ENCODE measurements at regions of chr1 and their contacts with region 1.

Region 1: DNA sequence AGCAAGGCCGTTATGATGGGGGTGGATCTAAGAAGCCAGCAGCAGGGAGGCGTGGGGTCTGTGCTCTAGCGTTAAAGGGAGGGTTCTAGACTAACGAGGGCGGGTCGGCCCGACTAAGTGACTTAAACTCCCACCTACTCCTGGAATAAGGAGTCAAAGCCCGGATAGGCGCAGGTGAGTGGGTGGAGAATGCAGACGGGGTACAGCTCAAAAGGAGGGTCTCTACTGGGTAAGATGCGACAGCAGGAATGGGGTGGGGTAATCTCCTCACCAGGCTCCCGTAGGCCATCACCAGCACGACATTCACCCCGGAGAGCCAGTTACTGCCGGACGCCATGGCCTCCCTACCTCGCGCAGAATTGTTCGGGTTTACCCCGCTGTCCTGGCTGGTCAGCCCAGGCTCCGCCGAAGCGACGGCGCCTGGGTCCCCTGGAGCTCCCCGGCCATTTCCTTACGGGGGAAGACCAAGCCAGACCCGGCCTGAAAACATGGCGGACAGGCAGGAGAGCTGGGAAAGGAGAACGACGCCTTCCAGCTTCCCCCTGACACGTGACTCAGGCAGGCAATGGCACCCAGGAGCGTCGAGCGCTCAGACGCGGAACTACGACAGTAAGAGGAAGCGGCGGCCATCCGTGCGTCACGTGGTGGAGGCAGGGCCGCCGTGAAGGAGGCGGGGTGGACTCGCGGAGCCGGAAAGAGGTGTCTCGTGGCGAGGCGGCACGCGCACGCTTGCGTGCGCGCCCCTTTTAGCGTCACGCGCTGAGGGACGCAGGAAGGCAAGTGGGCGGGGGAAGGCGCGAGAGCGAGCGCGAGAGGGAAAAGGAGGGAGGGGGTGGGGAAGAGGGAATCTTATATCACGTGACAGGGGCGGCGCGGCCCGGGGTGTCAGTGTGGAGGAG is at the start of gene UBAP2L:
- DNase-seq: peak; percentile 93 to 99 (median 99)
- ATAC-seq: peak; percentile 87
- H3K4me3 Mint-ChIP-seq: peak within 1 kb of the TSS; percentile 83 to 99 (median 96)
- H3K27ac Mint-ChIP-seq: peak within 1 kb of the TSS; percentile 99 to 100 (median 100)
- H3K4me1 Mint-ChIP-seq: peaks cover 44 to 74% (median 74%) of the 10 kb centered on the region in 4 donors
- H3K27me3 Mint-ChIP-seq: peaks cover 0 to 2% (median 0%) of the 10 kb centered on the region in 5 donors
- polyA plus RNA-seq, gene UBAP2L: 42.0 to 70.5 (median 54.8) TPM

Region 2: GRCh38 chr1:154157520-154158306 is 62.6 kb before region 1 on chr1:
- POLR2A ChIA-PET with region 1: interaction called, 27 read pairs
- DNase-seq: peak; percentile 23 to 90 (median 76)
- ATAC-seq: peak; percentile 98
- H3K4me3 Mint-ChIP-seq: peak overlapping the region; percentile 54 to 85 (median 80)
- H3K27ac Mint-ChIP-seq: peak overlapping the region; percentile 93 to 98 (median 95)
- H3K4me1 Mint-ChIP-seq: peaks cover 39 to 73% (median 65%) of the 10 kb centered on the region in 4 donors
- H3K27me3 Mint-ChIP-seq: no peaks in the 10 kb centered on the region

Region 3: GRCh38 chr1:154183045-154183915 is 37.0 kb before region 1 on chr1:
- POLR2A ChIA-PET with region 1: interaction called, 29 read pairs
- DNase-seq: peak; percentile 87 to 96 (median 94)
- ATAC-seq: peak; percentile 80 to 81
- H3K4me3 Mint-ChIP-seq: peak overlapping the region; percentile 97 to 100 (median 100)
- H3K27ac Mint-ChIP-seq: peak overlapping the region; percentile 95 to 100 (median 99)
- H3K4me1 Mint-ChIP-seq: peaks cover 36 to 51% (median 46%) of the 10 kb centered on the region in 4 donors
- H3K27me3 Mint-ChIP-seq: peaks cover 0 to 6% (median 0%) of the 10 kb centered on the region in 5 donors

Region 4: GRCh38 chr1:154386643-154387352 is 166.5 kb after region 1 on chr1:
- POLR2A ChIA-PET with region 1: no interaction called
- DNase-seq: peak; percentile 41 to 84 (median 65)
- ATAC-seq: peak; percentile 92 to 93
- H3K4me3 Mint-ChIP-seq: peak overlapping the region; percentile 67 to 87 (median 84)
- H3K27ac Mint-ChIP-seq: peak overlapping the region; percentile 93 to 100 (median 97)
- H3K4me1 Mint-ChIP-seq: peaks cover 14 to 56% (median 36%) of the 10 kb centered on the region in 4 donors
- H3K27me3 Mint-ChIP-seq: no peaks in the 10 kb centered on the region

Region 5: DNA sequence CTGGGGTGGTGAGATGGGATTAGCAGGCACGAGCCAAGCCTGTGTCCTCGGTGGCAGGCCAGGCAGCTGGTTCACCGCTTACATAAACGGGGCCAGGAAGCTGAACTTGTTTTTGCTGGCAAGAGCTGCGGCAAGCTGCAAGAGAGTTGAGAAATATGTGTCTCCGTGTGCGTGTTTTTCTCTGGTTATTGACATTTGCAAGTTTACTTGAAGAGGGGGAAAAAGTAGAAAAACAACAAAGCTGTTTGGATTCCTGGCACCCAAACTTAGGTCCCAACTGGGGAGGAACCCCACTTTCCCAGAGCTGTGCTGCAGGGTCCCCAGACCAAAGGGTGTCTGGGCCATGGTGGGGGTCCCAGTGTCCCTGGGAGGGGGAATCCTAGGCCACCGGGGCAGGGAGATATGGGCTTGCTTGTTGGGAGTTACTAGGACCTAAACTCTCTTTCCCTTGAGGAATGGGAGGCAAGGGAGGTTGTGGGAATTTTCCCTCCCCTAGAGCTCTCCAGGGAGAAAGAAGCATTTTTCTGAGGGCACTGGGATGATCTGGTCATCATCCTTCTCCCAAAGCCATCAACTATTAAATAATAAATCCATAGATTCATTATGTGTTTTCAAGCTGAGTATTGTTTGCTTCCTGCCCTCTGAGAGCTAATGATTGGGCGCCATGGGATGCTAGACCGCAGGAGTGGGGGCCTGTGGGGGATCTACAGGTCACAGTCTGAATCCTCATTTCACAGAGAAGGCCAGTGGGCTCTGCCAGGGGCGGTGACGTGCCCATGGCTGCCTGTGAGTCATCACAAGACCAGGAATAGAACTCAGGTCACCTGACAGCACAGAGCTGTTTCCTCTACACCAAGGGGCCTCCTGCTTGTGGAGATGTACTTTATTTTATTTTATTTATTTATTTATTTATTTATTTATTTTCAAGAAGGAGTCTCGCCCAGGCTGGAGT is 199.6 kb after region 1 on chr1:
- POLR2A ChIA-PET with region 1: no interaction called
- DNase-seq: peak in 6 of 10 donors; percentile 31 to 56 (median 33)
- ATAC-seq: peak; percentile 78 to 82
- H3K4me3 Mint-ChIP-seq: peak overlapping the region; percentile 54 to 88 (median 77)
- H3K27ac Mint-ChIP-seq: peak overlapping the region; percentile 85 to 99 (median 94)
- H3K4me1 Mint-ChIP-seq: peaks cover 43 to 90% (median 81%) of the 10 kb centered on the region in 4 donors
- H3K27me3 Mint-ChIP-seq: no peaks in the 10 kb centered on the region

Measured in naive thymus-derived CD8-positive, alpha-beta T cell (primary cell).